ENCODE measurements at regions of chr4 and their contacts with region 1.

Region 1: GRCh38 chr4:188986271-188986689 is 847.0 kb downstream of the TRIML1 start:
- DNase-seq: peak; percentile 44
- H3K4me3 ChIP-seq: no peak overlapping the region
- H3K27ac ChIP-seq: no peak overlapping the region
- H3K4me1 ChIP-seq: no peaks in the 10 kb centered on the region
- H3K27me3 ChIP-seq: peaks cover 5% of the 10 kb centered on the region
- CTCF ChIP-seq: no peak

Region 2: DNA sequence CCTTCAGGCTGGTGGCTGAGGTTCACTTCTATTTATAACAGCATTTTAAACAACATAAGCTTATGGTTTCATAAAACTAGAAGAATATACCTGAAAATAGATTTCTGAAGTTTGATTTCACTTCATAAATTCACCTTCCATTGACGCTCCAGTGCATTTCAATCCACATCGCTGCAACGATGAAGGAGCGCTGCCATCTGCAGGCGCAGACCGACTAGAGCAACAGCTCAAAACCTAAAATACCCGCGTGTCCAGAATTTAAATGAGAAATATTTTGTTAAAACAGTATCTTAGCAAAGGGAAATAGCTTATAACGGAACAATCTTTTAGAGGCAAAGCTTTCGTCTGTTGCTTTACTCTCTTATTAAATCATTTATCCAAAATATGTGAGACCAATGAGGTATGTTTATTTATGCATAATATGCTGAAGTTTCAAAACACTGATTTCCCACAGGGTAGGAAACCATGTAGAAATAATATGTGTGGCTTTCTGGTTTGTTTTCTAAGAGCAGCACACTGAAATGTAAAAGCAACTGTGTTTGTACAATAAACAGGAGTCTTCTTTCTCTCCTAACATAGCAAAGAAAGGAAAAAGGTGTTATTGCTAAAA is 138.0 kb after region 1 on chr4:
- CTCF ChIA-PET with region 1: interaction called, 10 read pairs
- POLR2A ChIA-PET with region 1: no interaction called
- intact Hi-C with region 1: no loop called
- DNase-seq: peak; percentile 42
- H3K4me3 ChIP-seq: no peak overlapping the region
- H3K27ac ChIP-seq: no peak overlapping the region
- H3K4me1 ChIP-seq: no peaks in the 10 kb centered on the region
- H3K27me3 ChIP-seq: peaks cover 23% of the 10 kb centered on the region
- CTCF ChIP-seq: peak; percentile 60